ENCODE measurements at regions of chr10 and their contacts with region 1.

Region 1: DNA sequence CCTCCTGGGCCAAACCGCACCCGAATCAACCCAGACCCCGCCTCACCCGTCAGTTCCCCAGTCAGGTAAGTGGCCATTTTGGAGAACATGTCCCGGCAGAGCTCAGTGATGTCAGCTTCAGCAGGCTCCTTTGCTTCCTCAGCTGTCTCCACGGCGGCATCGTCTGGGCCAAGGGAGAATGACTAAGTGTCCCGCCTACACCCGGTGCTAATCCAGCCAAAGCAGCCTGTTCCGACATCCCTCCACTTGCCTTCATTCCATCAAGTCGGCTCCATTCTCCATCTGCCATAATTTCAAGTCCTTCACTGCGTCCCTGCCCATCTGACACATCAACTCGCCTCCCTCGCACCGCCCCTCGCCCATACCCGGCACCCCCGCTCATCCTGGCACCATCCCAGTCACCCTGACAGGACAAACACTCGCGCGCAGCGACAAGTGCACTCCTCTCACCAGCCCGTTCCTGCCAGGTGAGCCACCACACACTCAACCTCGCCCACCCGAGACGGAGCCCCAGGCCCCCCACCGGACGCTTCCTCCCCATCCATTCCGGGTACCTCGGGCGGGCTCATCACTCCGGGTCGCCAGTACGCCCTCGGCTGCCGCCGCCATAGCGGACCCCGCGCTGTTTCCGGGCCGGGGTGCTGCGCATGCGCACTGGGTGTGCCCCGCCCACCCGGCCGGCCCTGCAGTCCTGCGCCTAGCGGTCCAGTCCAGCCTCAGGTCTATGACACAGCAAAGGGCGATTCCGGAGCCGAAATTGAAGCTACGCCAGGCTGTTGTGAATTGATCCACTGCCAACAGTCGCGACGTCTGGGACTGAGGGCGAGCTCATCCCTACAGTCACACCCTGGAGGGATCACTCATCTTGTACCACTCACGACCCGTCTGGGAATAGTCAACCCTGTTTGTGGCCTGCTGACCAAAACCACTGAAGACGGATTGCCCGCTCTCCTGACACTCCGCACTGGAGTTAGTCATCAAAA is at the start of gene BLOC1S2:
- DNase-seq: peak; percentile 91
- ATAC-seq: peak; percentile 99
- total RNA-seq, gene BLOC1S2: 20.9 TPM

Region 2: DNA sequence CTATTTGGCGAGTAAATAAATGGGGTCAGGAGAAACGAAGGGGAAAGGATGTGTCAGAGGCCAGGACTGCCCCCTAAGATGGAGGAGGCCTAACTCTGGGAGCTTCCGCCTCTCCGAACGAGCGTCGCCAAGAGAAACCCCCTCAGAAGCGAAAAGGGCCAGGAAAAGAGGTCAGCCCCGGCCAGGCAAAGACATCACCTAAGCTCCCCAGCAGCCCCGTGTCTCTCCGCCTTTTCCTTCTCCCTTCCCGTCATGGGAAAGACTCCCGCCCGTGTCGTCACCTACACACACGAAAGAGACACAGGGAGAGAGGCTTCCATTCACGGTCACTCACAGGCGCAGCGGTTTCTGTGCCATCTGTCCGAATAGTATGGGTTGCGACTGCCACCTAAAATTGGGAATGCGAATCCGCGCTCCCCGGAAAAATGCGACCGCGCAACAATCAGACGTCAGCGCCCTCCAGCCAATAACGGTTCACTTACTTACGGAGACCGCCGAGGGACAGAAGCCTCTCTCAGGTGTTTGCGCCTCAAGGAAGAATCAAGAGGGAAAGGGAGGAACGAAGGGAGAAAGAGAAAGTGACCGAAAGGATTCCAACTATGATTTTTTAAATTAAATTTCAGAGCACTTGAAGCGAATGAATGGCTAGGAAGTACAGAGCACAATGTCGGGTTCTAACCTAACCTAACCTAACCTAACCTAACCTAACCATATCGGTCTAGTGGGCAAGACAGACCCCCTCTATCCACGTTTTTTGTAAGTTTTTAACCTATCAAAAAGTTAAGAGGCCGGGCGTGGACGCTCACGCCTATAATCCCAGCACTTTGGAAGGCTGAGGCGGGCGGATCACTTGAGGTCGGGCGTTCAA is 18.9 kb before region 1 on chr10 and contains the start of gene CWF19L1:
- intact Hi-C with region 1: loop called (anchors 1 kb)
- DNase-seq: peak; percentile 90
- ATAC-seq: peak; percentile 96
- total RNA-seq, gene CWF19L1: 12.9 TPM

Region 3: DNA sequence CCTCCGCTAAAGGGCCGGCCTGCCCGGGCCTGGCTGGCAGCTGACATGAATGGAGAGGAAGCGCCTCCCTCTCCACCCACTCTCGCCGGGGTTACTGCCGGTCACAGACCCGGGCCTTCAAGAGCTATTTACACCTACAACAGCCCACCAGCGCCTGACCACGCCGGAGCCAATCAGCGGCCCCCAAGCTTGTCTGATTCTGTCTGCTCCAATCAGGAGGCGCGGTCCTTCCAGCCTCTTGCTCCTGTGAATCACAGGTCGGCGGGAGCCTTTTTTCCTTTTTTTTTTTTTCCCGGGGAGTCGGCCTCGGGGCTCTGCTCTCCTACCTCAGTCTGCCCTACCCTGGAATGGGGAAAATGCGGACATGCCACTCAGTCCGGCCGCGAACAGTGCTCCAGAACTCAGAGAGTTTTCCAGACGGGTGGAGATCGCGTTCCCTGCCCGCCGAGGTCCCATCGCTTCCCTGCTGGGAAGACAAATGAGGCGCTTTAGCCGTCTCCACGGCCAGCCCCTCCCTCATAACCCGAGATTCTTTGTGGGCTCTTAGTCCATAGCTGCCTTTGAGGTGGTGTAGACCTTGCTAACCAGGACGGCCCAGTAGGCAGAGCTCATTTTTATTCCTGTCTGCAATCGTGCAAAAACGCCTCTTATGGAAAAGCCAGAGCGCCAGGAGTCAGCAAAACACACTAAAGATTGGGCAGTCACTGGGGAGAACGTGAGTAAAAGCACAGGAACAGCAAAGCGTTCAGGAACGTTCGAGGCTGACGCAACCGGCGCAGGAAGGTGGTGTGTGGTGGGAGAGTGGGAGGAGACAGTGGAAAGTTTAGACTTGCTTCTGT is 87.2 kb after region 1 on chr10:
- intact Hi-C with region 1: loop called (anchors 5 kb)
- DNase-seq: peak; percentile 98
- ATAC-seq: peak; percentile 97

Region 4: GRCh38 chr10:100496567-100496966 is 210.2 kb after region 1 on chr10:
- intact Hi-C with region 1: no loop called
- DNase-seq: no peak
- ATAC-seq: no peak

Region 5: GRCh38 chr10:100518761-100519241 is 232.5 kb after region 1 on chr10:
- intact Hi-C with region 1: no loop called
- DNase-seq: no peak
- ATAC-seq: peak; percentile 72

Measured in Right ventricle myocardium inferior (tissue), 1 donor.